ENCODE measurements at regions of chr9 and their contacts with region 1.

Region 1: DNA sequence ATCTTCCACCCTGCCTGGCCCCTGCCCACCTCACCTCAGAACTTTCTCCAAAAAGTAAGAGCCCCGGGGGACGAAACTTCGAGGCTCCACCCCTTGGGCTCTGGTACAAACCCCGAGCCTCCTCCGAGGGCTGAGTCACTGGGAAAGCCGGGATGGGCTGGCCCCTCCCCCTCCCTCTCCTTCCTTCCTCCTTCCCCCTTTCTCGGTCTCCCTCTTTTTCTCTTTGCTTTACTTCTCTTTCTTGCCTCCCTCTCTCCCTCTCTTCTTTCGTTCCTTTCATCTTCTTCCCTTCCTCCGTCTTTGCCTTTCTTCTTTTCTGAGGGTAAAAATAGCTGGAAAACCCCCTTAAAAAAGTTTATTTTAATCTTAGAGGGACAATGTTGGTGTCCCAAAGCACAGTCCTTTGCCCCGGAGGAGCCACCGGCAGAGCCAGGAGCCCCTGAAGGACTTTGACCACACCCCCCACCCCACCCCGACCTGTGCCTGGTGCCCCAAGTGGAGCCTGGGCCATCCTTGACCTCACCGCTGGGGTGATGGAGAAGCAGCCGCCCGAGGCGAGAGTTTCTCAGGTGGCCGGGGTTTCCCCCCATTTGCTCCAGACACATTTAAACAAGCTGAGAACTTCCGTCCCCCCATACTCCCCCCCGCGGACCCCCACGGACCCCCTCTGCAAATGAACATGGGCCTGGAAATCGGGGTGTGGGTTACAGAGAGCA is 5.7 kb upstream of the NOTCH1 start:
- DNase-seq: peak; percentile 80 to 88 (median 82)
- H3K4me3 ChIP-seq: peak overlapping the region; percentile 0
- H3K27ac ChIP-seq: peak overlapping the region in 1 of 2 donors; percentile 30
- H3K4me1 ChIP-seq: peaks cover 15% of the 10 kb centered on the region
- H3K27me3 ChIP-seq: no peaks in the 10 kb centered on the region
- CTCF ChIP-seq: no peak
- EP300 ChIP-seq: no peak
- POLR2A ChIP-seq: no peak

Region 2: GRCh38 chr9:134656334-134657006 is 1895.1 kb before region 1 on chr9:
- intact Hi-C with region 1: loop called in 1 of 4 experiments (anchors 10 kb)
- DNase-seq: peak in 1 of 5 donors; percentile 19
- H3K4me3 ChIP-seq: no peak overlapping the region
- H3K27ac ChIP-seq: no peak overlapping the region
- H3K4me1 ChIP-seq: peaks cover 42% of the 10 kb centered on the region
- H3K27me3 ChIP-seq: no peaks in the 10 kb centered on the region
- CTCF ChIP-seq: no peak
- EP300 ChIP-seq: no peak
- POLR2A ChIP-seq: no peak

Region 3: GRCh38 chr9:137223078-137223970 is 671.8 kb after region 1 on chr9:
- intact Hi-C with region 1: no loop called
- DNase-seq: peak; percentile 98
- H3K4me3 ChIP-seq: peak overlapping the region; percentile 50
- H3K27ac ChIP-seq: peak overlapping the region in 1 of 2 donors; percentile 62
- H3K4me1 ChIP-seq: peaks cover 6% of the 10 kb centered on the region
- H3K27me3 ChIP-seq: peaks cover 3% of the 10 kb centered on the region
- CTCF ChIP-seq: no peak
- EP300 ChIP-seq: no peak
- POLR2A ChIP-seq: peak; percentile 26

Measured in ovary (tissue), 10 donors.